AG04449 (cell line): ENCODE measurements at regions of chr5 and their contacts with region 1.

Region 1: GRCh38 chr5:59356813-59357380 is 536.6 kb downstream of the PDE4D start:
- DNase-seq: no peak
- H3K4me3 ChIP-seq: no peak overlapping the region
- CTCF ChIP-seq: no peak

Region 2: GRCh38 chr5:59007460-59008063 is 349.3 kb before region 1 on chr5:
- CTCF ChIA-PET with region 1: no interaction called
- POLR2A ChIA-PET with region 1: no interaction called
- DNase-seq: no peak
- H3K4me3 ChIP-seq: no peak overlapping the region
- CTCF ChIP-seq: no peak

Region 3: GRCh38 chr5:59218424-59219045 is 138.4 kb before region 1 on chr5:
- CTCF ChIA-PET with region 1: interaction called, 18 read pairs
- POLR2A ChIA-PET with region 1: no interaction called
- DNase-seq: no peak
- H3K4me3 ChIP-seq: no peak overlapping the region
- CTCF ChIP-seq: no peak